ENCODE measurements at regions of chr3 and their contacts with region 1.

Region 1: GRCh38 chr3:121545574-121546455 is at the start of gene POLQ:
- DNase-seq: peak; percentile 94
- H3K4me3 Mint-ChIP-seq: peak within 1 kb of the TSS; percentile 95
- H3K27ac Mint-ChIP-seq: peak within 1 kb of the TSS; percentile 92
- H3K4me1 Mint-ChIP-seq: no peaks in the 10 kb centered on the region
- H3K27me3 Mint-ChIP-seq: no peaks in the 10 kb centered on the region
- total RNA-seq, gene POLQ: 20.1 to 20.8 TPM

Region 2: GRCh38 chr3:121566773-121567172 is 21.0 kb after region 1 on chr3:
- CTCF ChIA-PET with region 1: no interaction called
- intact Hi-C with region 1: no loop called
- DNase-seq: no peak
- H3K4me3 Mint-ChIP-seq: no peak overlapping the region
- H3K27ac Mint-ChIP-seq: no peak overlapping the region
- H3K4me1 Mint-ChIP-seq: no peaks in the 10 kb centered on the region
- H3K27me3 Mint-ChIP-seq: no peaks in the 10 kb centered on the region

Region 3: DNA sequence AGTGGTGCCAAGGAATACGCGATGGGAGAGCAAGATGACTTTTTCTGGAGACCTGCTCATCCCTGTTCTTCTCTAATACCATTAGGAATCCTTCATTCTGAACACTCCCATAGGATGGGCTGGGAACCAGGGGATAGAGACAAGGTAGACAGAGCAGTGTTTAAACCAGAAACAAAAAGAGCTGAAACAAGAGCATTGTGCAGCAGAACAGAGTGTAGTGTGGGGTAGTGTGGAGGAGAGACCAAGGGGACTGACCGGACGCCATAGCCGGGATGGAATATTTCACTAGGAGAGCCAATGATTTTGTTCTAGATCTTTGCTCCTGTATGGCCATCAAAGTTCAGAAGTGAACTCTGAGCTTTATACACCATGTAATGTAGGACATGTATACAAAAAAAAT is 99.2 kb after region 1 on chr3:
- CTCF ChIA-PET with region 1: no interaction called
- intact Hi-C with region 1: no loop called
- DNase-seq: no peak
- H3K4me3 Mint-ChIP-seq: no peak overlapping the region
- H3K27ac Mint-ChIP-seq: no peak overlapping the region
- H3K4me1 Mint-ChIP-seq: peaks cover 27% of the 10 kb centered on the region
- H3K27me3 Mint-ChIP-seq: no peaks in the 10 kb centered on the region

Region 4: GRCh38 chr3:121749276-121750086 is 203.7 kb after region 1 on chr3 and contains the start of gene GOLGB1:
- CTCF ChIA-PET with region 1: interaction called, 3 read pairs
- intact Hi-C with region 1: loop called (anchors 1 kb)
- DNase-seq: peak; percentile 97
- H3K4me3 Mint-ChIP-seq: no peak within 1 kb of the TSS
- H3K27ac Mint-ChIP-seq: no peak within 1 kb of the TSS
- H3K4me1 Mint-ChIP-seq: peaks cover 5% of the 10 kb centered on the region
- H3K27me3 Mint-ChIP-seq: no peaks in the 10 kb centered on the region
- total RNA-seq, gene GOLGB1: 18.2 to 19.7 TPM

Region 5: GRCh38 chr3:121883507-121883906 is 337.7 kb after region 1 on chr3:
- CTCF ChIA-PET with region 1: no interaction called
- intact Hi-C with region 1: loop called (anchors 1 kb)
- DNase-seq: no peak
- H3K4me3 Mint-ChIP-seq: no peak overlapping the region
- H3K27ac Mint-ChIP-seq: no peak overlapping the region
- H3K4me1 Mint-ChIP-seq: no peaks in the 10 kb centered on the region
- H3K27me3 Mint-ChIP-seq: no peaks in the 10 kb centered on the region

Region 6: DNA sequence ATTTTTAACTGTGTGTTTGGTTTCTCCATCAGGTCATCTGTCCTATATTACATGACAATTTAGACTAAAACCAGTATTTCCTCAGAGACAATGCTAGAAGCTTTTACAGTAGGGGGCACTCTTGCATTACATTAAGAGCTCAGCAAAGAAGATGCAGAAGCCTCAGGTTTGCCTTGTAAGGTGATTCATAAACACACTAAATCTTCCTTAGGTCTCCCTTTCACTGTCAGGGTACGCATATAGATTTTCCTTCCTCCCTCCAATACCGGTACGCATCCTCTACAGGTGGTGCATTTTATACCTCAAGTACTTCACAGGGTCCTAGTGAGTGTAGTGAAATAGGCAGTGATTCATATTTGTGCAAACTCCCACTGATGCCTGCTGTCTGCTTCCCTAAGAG is 555.8 kb after region 1 on chr3:
- CTCF ChIA-PET with region 1: interaction called, 16 read pairs
- intact Hi-C with region 1: loop called (anchors 1 kb)
- DNase-seq: peak; percentile 18
- H3K4me3 Mint-ChIP-seq: peak overlapping the region; percentile 5
- H3K27ac Mint-ChIP-seq: peak overlapping the region; percentile 60
- H3K4me1 Mint-ChIP-seq: peaks cover 39% of the 10 kb centered on the region
- H3K27me3 Mint-ChIP-seq: no peaks in the 10 kb centered on the region

Region 7: GRCh38 chr3:122299872-122300460 is 754.2 kb after region 1 on chr3:
- CTCF ChIA-PET with region 1: interaction called, 11 read pairs
- intact Hi-C with region 1: loop called (anchors 1 kb)
- DNase-seq: peak; percentile 64
- H3K4me3 Mint-ChIP-seq: no peak overlapping the region
- H3K27ac Mint-ChIP-seq: no peak overlapping the region
- H3K4me1 Mint-ChIP-seq: peaks cover 16% of the 10 kb centered on the region
- H3K27me3 Mint-ChIP-seq: peaks cover 1% of the 10 kb centered on the region

Region 8: GRCh38 chr3:122679085-122679881 is 1133.5 kb after region 1 on chr3:
- CTCF ChIA-PET with region 1: no interaction called
- intact Hi-C with region 1: loop called (anchors 2 kb)
- DNase-seq: peak; percentile 91
- H3K4me3 Mint-ChIP-seq: peak overlapping the region; percentile 83
- H3K27ac Mint-ChIP-seq: peak overlapping the region; percentile 96
- H3K4me1 Mint-ChIP-seq: peaks cover 47% of the 10 kb centered on the region
- H3K27me3 Mint-ChIP-seq: no peaks in the 10 kb centered on the region

Region 9: DNA sequence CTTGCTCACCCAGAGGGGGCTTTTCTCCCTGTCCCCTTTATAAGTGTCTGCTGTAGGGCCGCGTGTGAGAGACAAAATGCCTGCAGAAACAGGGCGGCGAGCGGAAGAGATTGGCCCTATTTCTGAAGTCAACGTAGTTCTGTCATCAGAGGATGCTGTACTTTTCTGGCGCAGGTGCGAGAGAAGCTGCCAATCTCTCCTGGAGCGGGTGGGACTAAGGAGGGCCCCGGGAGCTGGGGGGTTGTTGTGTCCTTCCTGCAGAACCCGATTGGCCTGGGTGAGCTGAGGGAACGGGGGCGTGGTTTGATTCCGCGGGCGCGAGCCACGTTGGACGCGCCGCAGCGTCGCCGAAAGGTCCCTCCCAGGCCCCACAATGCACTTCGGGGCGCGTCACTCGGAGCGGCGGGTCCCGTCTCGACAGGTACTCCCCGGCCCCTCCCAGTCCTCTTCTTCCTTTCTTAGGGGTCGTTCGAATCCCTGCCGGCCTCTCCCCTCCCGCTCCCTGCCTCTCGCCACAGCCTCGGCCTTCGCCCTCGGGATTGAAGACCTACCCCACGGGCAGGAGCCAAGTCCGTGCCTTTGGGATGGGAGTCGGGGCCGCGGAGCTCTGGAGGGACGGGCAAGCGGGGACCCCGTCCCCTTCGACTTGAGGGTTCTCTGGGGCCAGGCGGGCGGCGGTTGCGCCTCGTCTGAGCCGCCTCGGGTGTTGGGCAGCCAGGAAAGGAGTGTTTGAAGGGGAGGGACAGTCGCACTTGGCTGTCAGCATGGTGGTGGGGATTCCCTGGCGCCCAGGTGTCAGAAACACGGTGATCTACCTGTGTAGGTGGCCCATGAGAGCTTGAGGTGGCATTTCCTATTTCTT is 1656.0 kb after region 1 on chr3 and contains the start of gene SEC22A:
- CTCF ChIA-PET with region 1: no interaction called
- intact Hi-C with region 1: loop called (anchors 1 kb)
- DNase-seq: peak; percentile 98
- H3K4me3 Mint-ChIP-seq: peak within 1 kb of the TSS; percentile 95
- H3K27ac Mint-ChIP-seq: peak within 1 kb of the TSS; percentile 95
- H3K4me1 Mint-ChIP-seq: peaks cover 27% of the 10 kb centered on the region
- H3K27me3 Mint-ChIP-seq: no peaks in the 10 kb centered on the region
- total RNA-seq, gene SEC22A: 14.3 to 18.7 TPM

Measured in activated naive CD4-positive, alpha-beta T cell treated with anti-CD3 and anti-CD28 coated beads for 36 hours (primary cell).